CD14-positive monocyte (primary cell): ENCODE measurements at regions of chr18 and their contacts with region 1.

Region 1: DNA sequence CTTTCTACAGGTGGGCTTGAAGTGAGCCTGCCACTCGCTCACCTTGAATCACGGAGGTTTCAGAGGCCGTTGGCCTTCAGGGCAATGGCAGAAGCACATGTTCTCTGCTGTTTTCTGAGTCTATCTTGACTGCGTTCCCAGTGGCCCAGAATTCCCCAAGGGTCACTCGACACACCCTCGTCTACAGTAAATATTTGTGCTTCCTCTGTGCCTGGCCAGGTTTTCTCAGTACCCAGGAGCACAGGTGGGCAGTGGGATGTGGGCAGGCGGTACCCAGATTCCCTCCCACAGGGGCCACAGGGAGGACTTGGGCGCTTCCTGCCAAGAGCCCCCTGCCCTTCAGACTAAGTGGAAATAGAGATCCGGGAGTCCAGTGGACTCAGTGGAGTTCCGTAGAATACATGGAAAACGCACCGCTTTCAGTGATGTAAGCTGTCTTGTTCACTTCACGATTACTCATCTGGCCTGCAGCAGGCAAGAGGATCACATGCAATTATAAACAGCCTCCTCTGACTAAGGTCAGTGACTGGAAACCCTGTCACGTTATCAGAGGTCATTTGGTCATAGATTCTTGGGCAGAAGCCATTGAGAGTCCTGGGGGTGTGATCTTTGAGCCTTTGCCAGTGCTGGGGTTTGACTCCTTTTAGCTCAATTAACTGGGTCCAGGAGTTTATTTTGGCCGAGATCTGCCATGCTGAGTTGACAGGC is 179.8 kb downstream of the NEDD4L start:
- DNase-seq: peak; percentile 24 to 67 (median 34)
- H3K4me3 ChIP-seq: no peak overlapping the region
- H3K4me3 Mint-ChIP-seq: peak overlapping the region in 1 of 2 donors; percentile 42
- H3K27ac ChIP-seq: no peak overlapping the region
- H3K27ac Mint-ChIP-seq: peak overlapping the region in 1 of 7 donors; percentile 21
- H3K4me1 ChIP-seq: peaks cover 3 to 33% of the 10 kb centered on the region in 2 donors
- H3K4me1 Mint-ChIP-seq: peaks cover 45% of the 10 kb centered on the region
- H3K27me3 ChIP-seq: peaks cover 15 to 49% of the 10 kb centered on the region in 2 donors
- H3K27me3 Mint-ChIP-seq: peaks cover 40 to 53% (median 51%) of the 10 kb centered on the region in 3 donors
- CTCF ChIP-seq: no peak

Region 2: GRCh38 chr18:58038063-58038462 is 185.8 kb before region 1 on chr18:
- intact Hi-C with region 1: no loop called
- DNase-seq: peak in 2 of 3 donors; percentile 20 to 34
- H3K4me3 ChIP-seq: no peak overlapping the region
- H3K4me3 Mint-ChIP-seq: peak overlapping the region in 1 of 2 donors; percentile 7
- H3K27ac ChIP-seq: no peak overlapping the region
- H3K27ac Mint-ChIP-seq: peak overlapping the region in 1 of 7 donors; percentile 15
- H3K4me1 ChIP-seq: peaks cover 6 to 14% of the 10 kb centered on the region in 2 donors
- H3K4me1 Mint-ChIP-seq: peaks cover 15% of the 10 kb centered on the region
- H3K27me3 ChIP-seq: peaks cover 6 to 10% of the 10 kb centered on the region in 2 donors
- H3K27me3 Mint-ChIP-seq: peaks cover 13 to 27% (median 24%) of the 10 kb centered on the region in 3 donors
- CTCF ChIP-seq: no peak

Region 3: GRCh38 chr18:58303363-58303762 is 79.5 kb after region 1 on chr18:
- intact Hi-C with region 1: loop called in 1 of 2 experiments (anchors 10 kb)
- DNase-seq: no peak
- H3K4me3 ChIP-seq: no peak overlapping the region
- H3K4me3 Mint-ChIP-seq: no peak overlapping the region
- H3K27ac ChIP-seq: no peak overlapping the region
- H3K27ac Mint-ChIP-seq: no peak overlapping the region
- H3K4me1 ChIP-seq: no peaks in the 10 kb centered on the region
- H3K4me1 Mint-ChIP-seq: no peaks in the 10 kb centered on the region
- H3K27me3 ChIP-seq: no peaks in the 10 kb centered on the region
- H3K27me3 Mint-ChIP-seq: peaks cover 0 to 1% (median 0%) of the 10 kb centered on the region in 3 donors
- CTCF ChIP-seq: no peak

Region 4: GRCh38 chr18:58314284-58314683 is 90.4 kb after region 1 on chr18:
- intact Hi-C with region 1: loop called (anchors 10 kb)
- DNase-seq: peak; percentile 91 to 94 (median 91)
- H3K4me3 ChIP-seq: no peak overlapping the region
- H3K4me3 Mint-ChIP-seq: no peak overlapping the region
- H3K27ac ChIP-seq: peak overlapping the region; percentile 6 to 79
- H3K27ac Mint-ChIP-seq: peak overlapping the region; percentile 77 to 95 (median 86)
- H3K4me1 ChIP-seq: peaks cover 23 to 29% of the 10 kb centered on the region in 2 donors
- H3K4me1 Mint-ChIP-seq: peaks cover 33% of the 10 kb centered on the region
- H3K27me3 ChIP-seq: no peaks in the 10 kb centered on the region
- H3K27me3 Mint-ChIP-seq: peaks cover 0 to 1% (median 0%) of the 10 kb centered on the region in 3 donors
- CTCF ChIP-seq: no peak